ENCODE measurements at regions of chr14 and their contacts with region 1.

Region 1: DNA sequence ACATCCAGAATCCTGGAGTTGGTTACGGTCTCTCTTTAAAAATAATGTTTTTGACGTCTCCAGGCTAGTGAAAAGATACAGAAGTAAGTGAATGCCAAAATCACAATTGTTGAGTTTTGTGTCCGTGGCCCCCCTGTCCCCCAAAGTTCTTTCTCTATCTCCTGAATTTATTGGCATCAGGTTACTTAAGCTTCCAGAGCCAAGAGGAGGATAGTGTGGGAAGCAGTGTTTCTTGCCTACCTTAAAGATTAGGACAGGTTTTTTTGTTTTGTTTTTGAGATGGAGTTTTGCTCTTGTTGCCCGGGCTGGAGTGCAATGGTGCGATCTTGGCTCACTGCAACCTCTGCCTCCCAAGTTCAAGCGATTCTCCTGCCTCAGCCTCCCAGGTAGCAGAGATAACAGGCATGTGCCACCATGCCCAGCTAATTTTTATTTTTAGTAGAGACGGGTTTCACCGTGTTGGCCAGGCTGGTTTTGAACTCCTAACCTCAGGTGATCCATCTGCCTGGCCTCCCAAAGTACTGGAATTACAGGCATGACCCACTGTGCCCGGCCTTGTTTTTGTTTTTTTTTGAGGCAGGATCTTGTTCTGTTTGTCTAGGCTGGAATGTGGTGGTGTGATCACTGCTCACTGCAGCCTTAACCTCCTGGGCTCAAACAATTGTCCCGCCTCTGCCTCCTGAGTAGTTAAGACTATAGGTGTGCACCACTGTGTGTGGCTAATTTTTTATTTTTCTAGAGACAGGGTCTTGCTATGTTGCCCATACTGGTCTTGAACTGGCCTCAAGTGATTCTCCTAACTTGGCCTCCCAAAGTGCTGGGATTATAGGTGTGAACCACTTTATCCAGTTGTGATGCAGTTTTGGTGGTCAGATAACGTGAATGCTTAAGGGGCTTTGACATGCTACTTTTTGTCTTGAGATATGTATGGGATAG is 5.4 kb downstream of the SRSF5 start:
- DNase-seq: no peak
- ATAC-seq: no peak
- H3K4me3 Mint-ChIP-seq: no peak overlapping the region
- H3K27ac Mint-ChIP-seq: peak overlapping the region; percentile 67
- H3K4me1 Mint-ChIP-seq: peaks cover 80% of the 10 kb centered on the region
- H3K27me3 Mint-ChIP-seq: peaks cover 2% of the 10 kb centered on the region
- CTCF ChIP-seq: no peak

Region 2: DNA sequence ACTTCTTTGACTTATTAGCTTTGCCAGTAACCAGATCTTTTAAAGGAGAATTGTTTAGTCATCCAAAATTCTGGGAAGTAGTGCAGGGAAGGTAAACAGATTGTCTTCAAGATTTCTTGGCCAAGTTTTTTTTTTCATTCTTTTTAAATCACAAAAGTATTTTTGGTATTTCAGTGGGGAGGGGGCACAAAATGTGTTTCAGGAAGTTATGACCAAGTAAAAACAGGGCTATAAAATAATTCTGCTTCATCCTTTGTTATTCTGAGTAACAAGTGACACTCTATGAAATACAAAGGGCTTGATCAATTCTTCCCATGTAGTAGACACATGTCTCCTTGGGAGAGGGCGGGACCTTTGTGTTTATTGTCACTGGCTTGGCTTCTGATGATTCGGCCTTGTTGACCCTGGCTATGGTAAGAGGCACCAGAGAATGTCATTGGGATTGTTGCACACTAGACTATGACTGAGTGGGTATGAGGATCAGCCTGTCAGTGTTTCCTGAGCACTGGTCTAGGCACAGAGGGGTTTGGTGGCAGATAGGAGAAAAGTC is 105.6 kb before region 1 on chr14:
- CTCF ChIA-PET with region 1: no interaction called
- POLR2A ChIA-PET with region 1: no interaction called
- intact Hi-C with region 1: no loop called
- DNase-seq: no peak
- ATAC-seq: peak; percentile 19
- H3K4me3 Mint-ChIP-seq: peak overlapping the region; percentile 6
- H3K27ac Mint-ChIP-seq: peak overlapping the region; percentile 53
- H3K4me1 Mint-ChIP-seq: peaks cover 86% of the 10 kb centered on the region
- H3K27me3 Mint-ChIP-seq: no peaks in the 10 kb centered on the region
- CTCF ChIP-seq: no peak

Region 3: DNA sequence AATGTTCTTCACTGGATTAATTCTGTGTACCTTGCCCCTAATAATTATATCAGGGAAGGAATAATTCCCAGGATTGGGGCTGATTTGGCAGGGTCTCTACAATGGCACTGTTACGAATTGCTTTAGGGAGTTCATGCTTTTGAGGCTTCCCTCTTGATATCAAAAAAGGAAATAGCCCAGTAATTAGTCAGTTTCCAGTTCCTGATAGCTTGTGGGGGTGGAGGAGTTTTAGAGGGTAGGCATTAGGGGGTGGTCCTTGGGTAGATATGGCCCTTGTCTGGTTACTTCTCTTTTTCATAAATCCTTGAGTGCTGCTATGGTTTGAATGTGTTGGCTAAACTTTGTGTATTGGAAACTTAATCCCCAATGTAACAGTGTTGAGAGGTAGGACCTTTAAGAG is 11.5 kb before region 1 on chr14:
- CTCF ChIA-PET with region 1: interaction called, 4 read pairs
- POLR2A ChIA-PET with region 1: interaction called, 28 read pairs
- intact Hi-C with region 1: no loop called
- DNase-seq: no peak
- ATAC-seq: no peak
- H3K4me3 Mint-ChIP-seq: no peak overlapping the region
- H3K27ac Mint-ChIP-seq: no peak overlapping the region
- H3K4me1 Mint-ChIP-seq: peaks cover 35% of the 10 kb centered on the region
- H3K27me3 Mint-ChIP-seq: no peaks in the 10 kb centered on the region
- CTCF ChIP-seq: no peak

Region 4: GRCh38 chr14:69784942-69785341 is 12.6 kb after region 1 on chr14:
- CTCF ChIA-PET with region 1: interaction called, 3 read pairs
- POLR2A ChIA-PET with region 1: interaction called, 13 read pairs
- intact Hi-C with region 1: no loop called
- DNase-seq: no peak
- ATAC-seq: no peak
- H3K4me3 Mint-ChIP-seq: no peak overlapping the region
- H3K27ac Mint-ChIP-seq: no peak overlapping the region
- H3K4me1 Mint-ChIP-seq: peaks cover 2% of the 10 kb centered on the region
- H3K27me3 Mint-ChIP-seq: no peaks in the 10 kb centered on the region
- CTCF ChIP-seq: no peak

Measured in activated CD8-positive, alpha-beta T cell treated with anti-CD3 and anti-CD28 coated beads for 36 hours (primary cell).